ENCODE measurements at regions of chr19 and their contacts with region 1.

Region 1: GRCh38 chr19:34926685-34927375 is at the start of gene ZNF30:
- DNase-seq: peak; percentile 54 to 89 (median 78)
- ATAC-seq: peak; percentile 97
- H3K4me3 ChIP-seq: peak within 1 kb of the TSS; percentile 62 to 78
- H3K4me3 Mint-ChIP-seq: peak within 1 kb of the TSS; percentile 90
- H3K27ac ChIP-seq: peak within 1 kb of the TSS; percentile 39 to 41
- H3K27ac Mint-ChIP-seq: peak within 1 kb of the TSS; percentile 82
- H3K4me1 ChIP-seq: peaks cover 12% of the 10 kb centered on the region
- H3K4me1 Mint-ChIP-seq: peaks cover 26% of the 10 kb centered on the region
- H3K27me3 ChIP-seq: no peaks in the 10 kb centered on the region
- H3K27me3 Mint-ChIP-seq: no peaks in the 10 kb centered on the region
- CTCF ChIP-seq: no peak
- total RNA-seq, gene ZNF30: 1.4 to 1.5 TPM

Region 2: DNA sequence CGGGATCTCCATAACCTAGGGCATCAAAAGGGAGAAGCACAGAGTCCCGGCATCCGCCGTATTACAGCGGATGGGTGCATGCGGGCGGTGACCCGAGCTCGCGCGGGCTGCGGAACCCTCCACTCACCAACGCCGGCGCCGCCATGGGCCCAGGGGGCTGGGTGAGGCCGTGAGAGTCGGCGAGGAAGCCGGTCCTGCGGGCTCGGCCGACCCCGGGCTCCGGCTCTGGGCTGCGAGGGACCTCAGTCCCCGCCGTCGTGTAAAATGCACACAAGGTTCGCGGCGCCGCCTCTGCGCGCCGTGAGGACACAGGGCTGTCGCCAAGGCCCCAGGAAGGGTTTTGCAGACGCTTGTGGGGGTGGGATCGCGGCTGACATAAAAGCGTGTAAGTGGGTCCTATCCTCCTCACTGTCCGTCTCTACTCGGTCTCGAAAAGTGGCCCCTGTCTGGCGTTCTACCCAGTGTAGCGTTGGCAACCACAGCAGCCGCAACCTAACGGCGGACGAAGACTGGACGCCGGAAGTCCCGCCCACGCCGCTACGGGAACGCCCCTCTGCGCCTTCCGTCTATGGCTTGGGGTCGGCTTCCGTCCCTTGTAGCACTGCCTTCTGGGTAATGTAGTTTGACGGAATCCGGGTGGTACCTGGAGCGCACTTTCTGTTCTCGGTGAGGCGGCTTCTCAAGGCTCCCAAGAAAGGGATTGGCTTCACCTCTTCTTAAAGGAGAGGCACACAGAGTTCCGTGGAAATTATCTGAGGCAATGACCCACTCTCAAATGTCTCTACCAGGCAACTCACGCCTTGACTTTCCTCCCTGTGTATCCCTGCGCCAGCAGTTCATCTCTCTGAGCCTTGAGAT is 153.9 kb before region 1 on chr19 and contains the start of gene ZNF599:
- CTCF ChIA-PET with region 1: no interaction called
- POLR2A ChIA-PET with region 1: no interaction called
- intact Hi-C with region 1: loop called in 1 of 2 experiments (anchors 2 kb)
- DNase-seq: peak; percentile 77 to 94 (median 90)
- ATAC-seq: peak; percentile 97
- H3K4me3 ChIP-seq: peak within 1 kb of the TSS; percentile 80 to 88
- H3K4me3 Mint-ChIP-seq: peak within 1 kb of the TSS; percentile 98
- H3K27ac ChIP-seq: peak within 1 kb of the TSS; percentile 69 to 77
- H3K27ac Mint-ChIP-seq: peak within 1 kb of the TSS; percentile 98
- H3K4me1 ChIP-seq: peaks cover 9% of the 10 kb centered on the region
- H3K4me1 Mint-ChIP-seq: peaks cover 21% of the 10 kb centered on the region
- H3K27me3 ChIP-seq: no peaks in the 10 kb centered on the region
- H3K27me3 Mint-ChIP-seq: peaks cover 6% of the 10 kb centered on the region
- CTCF ChIP-seq: no peak
- total RNA-seq, gene ZNF599: 3.9 to 4.5 TPM

Region 3: GRCh38 chr19:34838753-34839431 is 87.9 kb before region 1 on chr19:
- CTCF ChIA-PET with region 1: interaction called, 6 read pairs
- POLR2A ChIA-PET with region 1: interaction called, 8 read pairs
- intact Hi-C with region 1: loop called in 1 of 2 experiments (anchors 5 kb)
- DNase-seq: peak in 4 of 9 experiments; percentile 30 to 60 (median 40)
- ATAC-seq: peak; percentile 38
- H3K4me3 ChIP-seq: no peak overlapping the region
- H3K4me3 Mint-ChIP-seq: peak overlapping the region; percentile 75
- H3K27ac ChIP-seq: no peak overlapping the region
- H3K27ac Mint-ChIP-seq: no peak overlapping the region
- H3K4me1 ChIP-seq: peaks cover 11% of the 10 kb centered on the region
- H3K4me1 Mint-ChIP-seq: peaks cover 19% of the 10 kb centered on the region
- H3K27me3 ChIP-seq: no peaks in the 10 kb centered on the region
- H3K27me3 Mint-ChIP-seq: no peaks in the 10 kb centered on the region
- CTCF ChIP-seq: no peak

Region 4: GRCh38 chr19:34851353-34851752 is 75.5 kb before region 1 on chr19:
- CTCF ChIA-PET with region 1: interaction called, 3 read pairs
- POLR2A ChIA-PET with region 1: no interaction called
- intact Hi-C with region 1: loop called in 1 of 2 experiments (anchors 10 kb)
- DNase-seq: peak in 2 of 9 experiments; percentile 17 to 32
- ATAC-seq: no peak
- H3K4me3 ChIP-seq: no peak overlapping the region
- H3K4me3 Mint-ChIP-seq: no peak overlapping the region
- H3K27ac ChIP-seq: no peak overlapping the region
- H3K27ac Mint-ChIP-seq: peak overlapping the region; percentile 37
- H3K4me1 ChIP-seq: peaks cover 12% of the 10 kb centered on the region
- H3K4me1 Mint-ChIP-seq: peaks cover 48% of the 10 kb centered on the region
- H3K27me3 ChIP-seq: no peaks in the 10 kb centered on the region
- H3K27me3 Mint-ChIP-seq: no peaks in the 10 kb centered on the region
- CTCF ChIP-seq: no peak